ENCODE measurements at regions of chr18 and their contacts with region 1.

Region 1: GRCh38 chr18:74623047-74623816 is 25.6 kb downstream of the ZNF407 start:
- DNase-seq: no peak
- H3K4me3 ChIP-seq: 0 out of 8 replicates have a peak overlapping the region, but pooled peaks of 1 of the 4 experiments have one; percentile 25
- H3K27ac ChIP-seq: no peak overlapping the region; the same call in 1 of the 2 replicates
- H3K4me1 ChIP-seq: peaks cover 4 to 13% (median 11%) of the 10 kb centered on the region in 4 experiments
- H3K27me3 ChIP-seq: no peaks in the 10 kb centered on the region
- CTCF ChIP-seq: peak in 1 of 3 experiments; percentile 39; a peak in 2 of 4 replicates
- EP300 ChIP-seq: no peak
- POLR2A ChIP-seq: no peak
- RAD21 ChIP-seq: peak; percentile 46 to 58

Region 2: GRCh38 chr18:74633652-74634352 is 10.6 kb after region 1 on chr18:
- CTCF ChIA-PET with region 1: interaction called, 11 read pairs
- POLR2A ChIA-PET with region 1: no interaction called
- DNase-seq: no peak
- H3K4me3 ChIP-seq: no peak overlapping the region
- H3K27ac ChIP-seq: no peak overlapping the region
- H3K4me1 ChIP-seq: no peaks in the 10 kb centered on the region
- H3K27me3 ChIP-seq: no peaks in the 10 kb centered on the region
- CTCF ChIP-seq: no peak
- EP300 ChIP-seq: no peak
- POLR2A ChIP-seq: no peak
- RAD21 ChIP-seq: no peak

Measured in H1 (cell line).